MCF 10A (cell line): ENCODE measurements at regions of chr22 and their contacts with region 1.

Region 1: GRCh38 chr22:17158568-17159503 is at the start of gene HDHD5:
- DNase-seq: peak; percentile 83
- H3K4me3 Mint-ChIP-seq: peak within 1 kb of the TSS; percentile 86
- H3K27ac Mint-ChIP-seq: peak within 1 kb of the TSS; percentile 75
- H3K4me1 Mint-ChIP-seq: peaks cover 13% of the 10 kb centered on the region
- H3K27me3 Mint-ChIP-seq: no peaks in the 10 kb centered on the region
- CTCF ChIP-seq: no peak
- total RNA-seq, gene HDHD5: 38.7 and 51.8 TPM in 2 replicates

Region 2: DNA sequence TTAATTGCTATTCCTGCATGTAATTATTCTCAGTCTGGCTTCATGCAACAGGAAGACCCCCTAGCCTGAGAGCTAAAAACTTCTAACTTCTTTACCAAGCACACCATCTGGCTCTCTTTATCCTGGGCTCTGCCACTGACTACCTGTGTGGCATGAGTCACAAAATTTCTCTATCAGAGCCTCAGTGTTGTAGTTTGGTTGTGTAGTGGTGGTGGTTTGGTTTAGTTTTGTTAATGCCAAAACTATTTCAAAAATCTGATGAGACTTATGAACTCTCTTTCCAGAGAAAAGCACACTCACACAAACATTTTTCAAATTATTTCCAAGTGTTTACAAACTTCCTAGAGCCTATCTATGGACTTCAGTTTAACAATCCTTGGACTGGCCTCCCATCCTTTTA is 81.6 kb before region 1 on chr22:
- CTCF ChIA-PET with region 1: interaction called, 3 read pairs
- POLR2A ChIA-PET with region 1: interaction called, 3 read pairs
- intact Hi-C with region 1: loop called (anchors 2 kb)
- DNase-seq: no peak
- H3K4me3 Mint-ChIP-seq: no peak overlapping the region
- H3K27ac Mint-ChIP-seq: no peak overlapping the region
- H3K4me1 Mint-ChIP-seq: no peaks in the 10 kb centered on the region
- H3K27me3 Mint-ChIP-seq: no peaks in the 10 kb centered on the region
- CTCF ChIP-seq: no peak

Region 3: GRCh38 chr22:17084554-17085276 is 74.1 kb before region 1 on chr22 and contains the start of gene IL17RA:
- CTCF ChIA-PET with region 1: no interaction called
- POLR2A ChIA-PET with region 1: no interaction called
- intact Hi-C with region 1: loop called (anchors 2 kb)
- DNase-seq: peak; percentile 92
- H3K4me3 Mint-ChIP-seq: peak within 1 kb of the TSS; percentile 84
- H3K27ac Mint-ChIP-seq: peak within 1 kb of the TSS; percentile 88
- H3K4me1 Mint-ChIP-seq: peaks cover 14% of the 10 kb centered on the region
- H3K27me3 Mint-ChIP-seq: no peaks in the 10 kb centered on the region
- CTCF ChIP-seq: no peak
- total RNA-seq, gene IL17RA: 11.5 and 11.9 TPM in 2 replicates

Region 4: GRCh38 chr22:17303840-17304779 is 145.3 kb after region 1 on chr22:
- CTCF ChIA-PET with region 1: no interaction called
- POLR2A ChIA-PET with region 1: no interaction called
- intact Hi-C with region 1: no loop called
- DNase-seq: no peak
- H3K4me3 Mint-ChIP-seq: no peak overlapping the region
- H3K27ac Mint-ChIP-seq: peak overlapping the region; percentile 40
- H3K4me1 Mint-ChIP-seq: no peaks in the 10 kb centered on the region
- H3K27me3 Mint-ChIP-seq: no peaks in the 10 kb centered on the region
- CTCF ChIP-seq: no peak